Right lobe of liver (tissue), 6 donors: ENCODE measurements at regions of chr17 and their contacts with region 1.

Region 1: DNA sequence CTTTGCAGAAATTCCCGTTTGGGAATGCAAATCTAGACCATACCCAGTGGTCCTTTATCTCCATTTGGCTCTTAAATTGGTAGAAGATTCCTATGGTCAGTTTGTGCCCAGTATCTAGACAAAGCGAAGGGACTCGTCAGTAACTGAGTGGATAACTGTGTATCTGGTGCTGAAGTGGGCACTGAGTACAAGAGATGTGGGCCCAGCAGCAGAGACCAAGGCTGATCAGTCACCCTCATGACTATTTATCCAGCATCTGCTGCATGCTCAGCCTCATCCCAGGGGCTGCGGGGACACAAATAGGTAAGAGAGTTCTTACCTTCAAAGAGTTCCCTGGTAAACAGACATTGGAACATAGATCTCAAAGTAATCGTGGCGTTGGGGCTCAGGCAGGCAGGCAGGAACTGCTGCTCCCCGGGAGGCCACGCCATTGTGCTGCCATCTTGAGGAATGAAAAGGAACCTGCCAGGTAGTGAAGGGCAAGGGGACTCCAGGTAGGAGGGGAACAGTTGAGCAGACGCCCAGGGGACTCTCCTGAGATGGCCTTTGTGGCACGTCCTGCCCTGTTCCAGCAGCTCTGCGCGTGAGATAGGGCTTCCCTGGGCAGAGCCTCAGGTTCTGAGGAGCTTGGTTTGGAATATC is 10.3 kb downstream of the NT5M start:
- DNase-seq: peak; percentile 61 to 70 (median 65)
- ATAC-seq: peak; percentile 88 to 93 (median 90)
- H3K4me3 ChIP-seq: no peak overlapping the region
- H3K27ac ChIP-seq: no peak overlapping the region
- H3K4me1 ChIP-seq: no peaks in the 10 kb centered on the region
- H3K27me3 ChIP-seq: no peaks in the 10 kb centered on the region
- CTCF ChIP-seq: peak; percentile 55 to 77 (median 61)
- POLR2A ChIP-seq: no peak

Region 2: GRCh38 chr17:17001874-17002520 is 311.5 kb before region 1 on chr17:
- intact Hi-C with region 1: loop called (anchors 10 kb)
- DNase-seq: peak; percentile 86 to 91 (median 89)
- ATAC-seq: peak; percentile 92 to 98 (median 96)
- H3K4me3 ChIP-seq: no peak overlapping the region
- H3K27ac ChIP-seq: no peak overlapping the region
- H3K4me1 ChIP-seq: peaks cover 0 to 12% (median 4%) of the 10 kb centered on the region in 4 donors
- H3K27me3 ChIP-seq: no peaks in the 10 kb centered on the region
- CTCF ChIP-seq: peak; percentile 92 to 98 (median 96)
- POLR2A ChIP-seq: no peak